ENCODE measurements at regions of chr16 and their contacts with region 1.

Region 1: DNA sequence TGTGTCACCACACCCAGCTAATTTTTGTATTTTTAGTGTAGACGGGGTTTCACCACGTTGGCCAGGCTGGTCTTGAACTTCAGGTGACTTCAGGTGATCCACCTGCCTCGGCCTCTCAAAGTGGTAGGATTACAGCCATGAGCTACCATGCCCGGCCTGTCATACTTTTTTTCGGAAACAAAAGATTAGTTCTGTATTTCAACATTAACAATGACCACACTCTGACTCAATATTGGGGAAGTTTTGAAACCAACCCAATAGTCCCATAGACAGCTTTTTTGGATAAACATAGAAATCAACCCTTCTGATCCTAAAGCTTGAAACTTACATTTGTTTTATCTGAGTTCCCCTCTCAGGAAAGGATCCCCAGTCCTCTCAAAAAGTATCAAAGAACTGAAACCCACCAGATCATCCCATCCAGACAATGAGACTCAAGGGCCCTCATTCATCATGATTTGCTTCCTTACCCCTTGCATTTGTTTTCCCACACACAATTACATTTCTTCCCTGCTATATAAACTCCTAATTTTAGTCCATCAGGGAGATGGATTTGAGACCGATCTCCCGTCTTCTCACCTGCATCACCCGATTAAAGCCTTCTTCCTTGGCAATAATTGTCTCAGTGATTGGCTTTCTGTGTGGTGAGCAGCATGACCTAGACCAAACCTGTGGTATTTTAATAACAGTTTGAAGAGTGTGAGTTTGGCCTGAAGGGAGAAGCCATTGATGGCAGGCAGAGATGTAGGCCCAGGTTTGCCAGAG is 7.2 kb upstream of the AGRP start:
- DNase-seq: no peak
- ATAC-seq: no peak
- H3K4me3 Mint-ChIP-seq: peak overlapping the region; percentile 61
- H3K27ac Mint-ChIP-seq: peak overlapping the region; percentile 89
- H3K4me1 Mint-ChIP-seq: peaks cover 77% of the 10 kb centered on the region
- H3K27me3 Mint-ChIP-seq: no peaks in the 10 kb centered on the region
- CTCF ChIP-seq: no peak

Region 2: GRCh38 chr16:67514382-67514828 is 23.9 kb after region 1 on chr16:
- CTCF ChIA-PET with region 1: interaction called, 298 read pairs
- POLR2A ChIA-PET with region 1: interaction called, 98 read pairs
- intact Hi-C with region 1: loop called (anchors 1 kb)
- DNase-seq: no peak
- ATAC-seq: peak; percentile 23
- H3K4me3 Mint-ChIP-seq: peak overlapping the region; percentile 60
- H3K27ac Mint-ChIP-seq: peak overlapping the region; percentile 94
- H3K4me1 Mint-ChIP-seq: peaks cover 73% of the 10 kb centered on the region
- H3K27me3 Mint-ChIP-seq: no peaks in the 10 kb centered on the region
- CTCF ChIP-seq: no peak

Region 3: GRCh38 chr16:67530013-67530939 is 39.8 kb after region 1 on chr16:
- CTCF ChIA-PET with region 1: interaction called, 6 read pairs
- POLR2A ChIA-PET with region 1: interaction called, 21 read pairs
- intact Hi-C with region 1: no loop called
- DNase-seq: peak; percentile 81
- ATAC-seq: peak; percentile 65
- H3K4me3 Mint-ChIP-seq: peak overlapping the region; percentile 90
- H3K27ac Mint-ChIP-seq: peak overlapping the region; percentile 95
- H3K4me1 Mint-ChIP-seq: peaks cover 61% of the 10 kb centered on the region
- H3K27me3 Mint-ChIP-seq: no peaks in the 10 kb centered on the region
- CTCF ChIP-seq: no peak

Region 4: GRCh38 chr16:67537270-67537635 is 46.7 kb after region 1 on chr16:
- CTCF ChIA-PET with region 1: interaction called, 6 read pairs
- POLR2A ChIA-PET with region 1: interaction called, 9 read pairs
- intact Hi-C with region 1: loop called (anchors 2 kb)
- DNase-seq: no peak
- ATAC-seq: peak; percentile 47
- H3K4me3 Mint-ChIP-seq: peak overlapping the region; percentile 90
- H3K27ac Mint-ChIP-seq: peak overlapping the region; percentile 93
- H3K4me1 Mint-ChIP-seq: peaks cover 82% of the 10 kb centered on the region
- H3K27me3 Mint-ChIP-seq: no peaks in the 10 kb centered on the region
- CTCF ChIP-seq: no peak

Region 5: DNA sequence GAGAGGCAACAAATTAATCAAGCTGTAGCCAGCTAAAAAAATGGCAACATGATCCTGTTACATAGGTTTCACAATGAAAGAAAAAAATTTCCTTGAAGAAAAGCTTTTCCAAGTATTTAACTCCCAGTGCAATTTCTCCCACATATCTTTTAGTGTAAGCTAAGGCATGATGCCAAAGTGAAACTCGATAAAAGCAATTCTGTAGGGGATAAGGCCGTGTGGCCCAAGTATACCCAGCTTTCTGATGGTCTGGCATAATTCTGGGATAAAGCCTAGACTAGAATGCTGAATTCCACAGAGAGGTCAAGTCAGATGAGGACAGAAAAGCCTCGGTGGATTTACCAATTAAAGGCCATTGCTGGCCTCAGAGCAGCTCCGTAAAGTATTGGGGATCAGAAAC is 108.0 kb after region 1 on chr16:
- CTCF ChIA-PET with region 1: no interaction called
- POLR2A ChIA-PET with region 1: interaction called, 12 read pairs
- intact Hi-C with region 1: no loop called
- DNase-seq: no peak
- ATAC-seq: no peak
- H3K4me3 Mint-ChIP-seq: no peak overlapping the region
- H3K27ac Mint-ChIP-seq: no peak overlapping the region
- H3K4me1 Mint-ChIP-seq: peaks cover 27% of the 10 kb centered on the region
- H3K27me3 Mint-ChIP-seq: no peaks in the 10 kb centered on the region
- CTCF ChIP-seq: no peak